ENCODE measurements at regions of chr6 and their contacts with region 1.

Region 1: DNA sequence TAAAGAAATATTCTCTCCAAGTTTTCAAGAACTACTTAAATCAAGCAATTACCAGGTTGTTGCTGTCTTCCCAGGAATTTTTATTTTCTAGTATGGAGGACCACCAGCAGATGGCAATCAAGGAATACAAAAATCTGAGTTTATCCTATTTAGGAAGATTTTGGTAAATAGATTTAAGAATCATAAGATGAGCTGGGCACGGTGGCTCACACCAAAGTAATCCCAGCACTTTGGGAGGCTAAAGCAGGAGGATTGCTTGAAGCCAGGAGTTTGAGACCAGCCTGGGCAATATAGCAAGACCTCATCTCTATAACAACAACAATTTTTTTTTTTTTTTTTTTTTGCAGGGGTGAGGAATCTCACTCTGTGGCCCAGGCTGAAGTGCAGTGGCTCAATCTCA is 19.3 kb upstream of the SEC63 start:
- DNase-seq: peak; percentile 43
- H3K4me3 Mint-ChIP-seq: no peak overlapping the region
- H3K27ac Mint-ChIP-seq: no peak overlapping the region
- H3K4me1 Mint-ChIP-seq: peaks cover 3% of the 10 kb centered on the region
- H3K27me3 Mint-ChIP-seq: no peaks in the 10 kb centered on the region
- CTCF ChIP-seq: peak; percentile 45

Region 2: GRCh38 chr6:107991061-107991460 is 13.8 kb after region 1 on chr6:
- CTCF ChIA-PET with region 1: interaction called, 57 read pairs
- POLR2A ChIA-PET with region 1: interaction called, 3 read pairs
- intact Hi-C with region 1: no loop called
- DNase-seq: no peak
- H3K4me3 Mint-ChIP-seq: no peak overlapping the region
- H3K27ac Mint-ChIP-seq: no peak overlapping the region
- H3K4me1 Mint-ChIP-seq: no peaks in the 10 kb centered on the region
- H3K27me3 Mint-ChIP-seq: no peaks in the 10 kb centered on the region
- CTCF ChIP-seq: no peak

Region 3: GRCh38 chr6:108039681-108040080 is 62.4 kb after region 1 on chr6:
- CTCF ChIA-PET with region 1: interaction called, 33 read pairs
- POLR2A ChIA-PET with region 1: no interaction called
- intact Hi-C with region 1: no loop called
- DNase-seq: no peak
- H3K4me3 Mint-ChIP-seq: no peak overlapping the region
- H3K27ac Mint-ChIP-seq: no peak overlapping the region
- H3K4me1 Mint-ChIP-seq: no peaks in the 10 kb centered on the region
- H3K27me3 Mint-ChIP-seq: no peaks in the 10 kb centered on the region
- CTCF ChIP-seq: no peak

Region 4: GRCh38 chr6:108068618-108069017 is 91.3 kb after region 1 on chr6:
- CTCF ChIA-PET with region 1: interaction called, 15 read pairs
- POLR2A ChIA-PET with region 1: no interaction called
- intact Hi-C with region 1: no loop called
- DNase-seq: no peak
- H3K4me3 Mint-ChIP-seq: no peak overlapping the region
- H3K27ac Mint-ChIP-seq: no peak overlapping the region
- H3K4me1 Mint-ChIP-seq: peaks cover 6% of the 10 kb centered on the region
- H3K27me3 Mint-ChIP-seq: no peaks in the 10 kb centered on the region
- CTCF ChIP-seq: no peak

Region 5: DNA sequence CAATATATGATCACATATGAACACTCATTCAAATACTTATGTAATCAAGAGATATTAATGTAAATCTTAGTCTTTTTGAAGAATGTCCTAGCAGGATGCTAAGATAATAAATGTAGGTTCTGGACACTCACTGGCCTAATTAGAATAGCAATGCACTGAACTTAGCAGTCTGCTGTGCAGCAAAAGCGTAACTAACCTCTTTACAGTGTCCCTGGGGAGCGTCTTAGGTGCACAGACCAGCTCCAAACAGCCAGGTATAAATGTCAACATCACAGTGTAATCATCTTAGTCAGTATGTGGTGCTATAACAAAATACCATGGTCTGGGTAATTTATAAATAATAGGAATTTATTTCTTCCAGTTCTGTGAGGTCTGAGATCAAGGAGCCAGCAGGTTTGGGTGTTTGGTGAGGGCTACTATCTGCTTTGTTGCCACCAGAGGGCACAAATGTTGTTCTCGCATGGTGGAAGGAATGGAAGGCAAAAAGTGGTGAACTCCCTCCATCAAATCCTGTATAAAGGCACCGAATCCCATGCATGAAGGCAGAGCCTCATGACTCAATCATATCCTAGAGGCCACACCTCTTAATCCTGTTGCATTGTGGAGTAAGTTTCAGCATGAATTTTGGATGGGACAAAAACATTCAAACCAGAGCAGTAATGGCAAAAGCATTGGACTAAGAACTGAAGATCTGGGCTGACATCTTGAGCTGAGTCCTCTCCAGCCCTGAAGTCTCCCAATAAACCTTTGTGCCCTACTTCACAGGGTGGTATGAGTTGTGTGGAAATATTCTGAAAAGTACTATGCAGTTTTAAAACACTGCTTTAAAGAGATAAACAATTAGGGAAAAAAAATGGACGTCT is 541.7 kb after region 1 on chr6:
- CTCF ChIA-PET with region 1: interaction called, 22 read pairs
- POLR2A ChIA-PET with region 1: no interaction called
- intact Hi-C with region 1: no loop called
- DNase-seq: peak; percentile 48
- H3K4me3 Mint-ChIP-seq: no peak overlapping the region
- H3K27ac Mint-ChIP-seq: no peak overlapping the region
- H3K4me1 Mint-ChIP-seq: no peaks in the 10 kb centered on the region
- H3K27me3 Mint-ChIP-seq: no peaks in the 10 kb centered on the region
- CTCF ChIP-seq: peak; percentile 20

Region 6: GRCh38 chr6:109411034-109411433 is 1433.8 kb after region 1 on chr6:
- CTCF ChIA-PET with region 1: no interaction called
- POLR2A ChIA-PET with region 1: no interaction called
- intact Hi-C with region 1: no loop called
- DNase-seq: peak; percentile 61
- H3K4me3 Mint-ChIP-seq: no peak overlapping the region
- H3K27ac Mint-ChIP-seq: no peak overlapping the region
- H3K4me1 Mint-ChIP-seq: peaks cover 6% of the 10 kb centered on the region
- H3K27me3 Mint-ChIP-seq: no peaks in the 10 kb centered on the region
- CTCF ChIP-seq: no peak